ENCODE measurements at regions of chr18 and their contacts with region 1.

Region 1: DNA sequence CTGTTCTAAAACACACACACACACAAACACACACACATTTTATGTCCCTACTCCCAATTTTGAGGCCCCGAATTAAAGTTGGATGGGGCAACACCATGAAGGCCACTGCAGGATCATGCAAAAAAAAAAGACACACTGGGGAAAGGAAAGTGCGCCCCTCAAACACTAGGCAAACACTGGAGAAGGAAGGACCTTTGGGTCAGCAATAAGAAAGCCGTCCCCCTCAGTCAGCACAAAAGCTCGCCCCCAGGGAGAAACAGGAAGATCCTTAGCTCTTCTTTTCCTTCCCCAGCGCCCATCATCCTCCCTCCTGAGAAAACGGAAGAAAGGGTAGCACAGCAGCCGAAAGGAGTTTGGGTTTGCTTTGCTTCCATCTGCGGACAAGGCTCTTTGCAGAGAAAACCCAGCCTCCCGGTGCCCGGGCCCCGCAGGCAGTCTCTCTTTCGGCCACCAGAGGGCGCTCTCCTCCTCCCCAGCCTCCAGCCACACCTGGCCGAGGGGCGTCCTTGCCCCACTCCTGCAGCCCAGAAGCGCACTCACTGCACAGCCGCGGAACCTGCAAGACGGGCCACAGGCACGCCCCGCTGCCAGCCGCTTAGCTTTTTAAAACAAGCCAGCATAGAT is 248.5 kb downstream of the CDH20 start:
- DNase-seq: no peak
- H3K4me3 ChIP-seq: peak overlapping the region; percentile 55
- H3K27ac ChIP-seq: peak overlapping the region; percentile 24
- H3K27me3 ChIP-seq: no peaks in the 10 kb centered on the region
- CTCF ChIP-seq: peak; percentile 94

Region 2: GRCh38 chr18:61569176-61569892 is 12.4 kb before region 1 on chr18:
- CTCF ChIA-PET with region 1: interaction called, 72 read pairs
- POLR2A ChIA-PET with region 1: no interaction called
- DNase-seq: peak; percentile 71
- H3K4me3 ChIP-seq: no peak overlapping the region
- H3K27ac ChIP-seq: peak overlapping the region; percentile 86
- H3K27me3 ChIP-seq: no peaks in the 10 kb centered on the region
- CTCF ChIP-seq: no peak

Region 3: GRCh38 chr18:61606759-61607158 is 25.1 kb after region 1 on chr18:
- CTCF ChIA-PET with region 1: interaction called, 81 read pairs
- POLR2A ChIA-PET with region 1: no interaction called
- DNase-seq: peak; percentile 68
- H3K4me3 ChIP-seq: peak overlapping the region; percentile 63
- H3K27ac ChIP-seq: peak overlapping the region; percentile 78
- H3K27me3 ChIP-seq: no peaks in the 10 kb centered on the region
- CTCF ChIP-seq: no peak

Region 4: DNA sequence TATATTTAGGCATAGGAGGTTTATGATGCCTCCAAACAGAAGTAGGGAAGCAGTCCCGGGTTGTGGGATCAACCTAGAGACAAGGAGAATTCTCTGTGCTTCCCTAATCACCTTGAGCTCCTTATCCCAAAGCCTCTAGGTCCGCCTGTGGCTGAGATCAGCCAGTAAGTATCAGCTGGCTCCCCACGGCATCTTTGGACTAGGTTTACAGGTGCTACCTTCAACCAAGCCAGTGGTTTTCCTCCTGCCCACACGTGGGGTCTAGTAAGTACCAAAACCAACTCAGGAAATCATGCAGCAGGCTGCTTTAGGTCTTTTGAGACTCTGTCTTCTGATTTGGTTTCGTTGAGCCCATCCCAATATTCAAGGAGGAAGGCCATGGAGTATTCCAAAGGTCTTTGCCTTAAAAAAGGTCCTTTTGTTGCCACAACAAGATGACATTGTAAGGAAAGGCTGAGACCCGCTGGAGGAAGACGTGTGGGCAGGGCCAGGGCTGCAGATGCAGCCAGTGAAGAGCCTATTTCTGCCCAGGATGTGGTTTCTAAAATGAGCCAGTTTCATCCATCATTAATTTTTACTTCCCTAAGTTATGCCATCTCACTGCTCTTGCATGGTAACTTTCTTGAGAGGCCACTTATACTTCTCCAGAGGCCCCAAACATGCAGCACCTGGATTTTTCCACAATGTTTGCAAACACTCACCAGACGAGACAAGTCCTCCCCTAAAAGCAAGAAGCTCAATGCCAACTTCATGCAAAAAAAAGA is 62.4 kb after region 1 on chr18:
- CTCF ChIA-PET with region 1: interaction called, 10 read pairs
- POLR2A ChIA-PET with region 1: no interaction called
- DNase-seq: no peak
- H3K4me3 ChIP-seq: no peak overlapping the region
- H3K27ac ChIP-seq: no peak overlapping the region
- H3K27me3 ChIP-seq: no peaks in the 10 kb centered on the region
- CTCF ChIP-seq: no peak

Region 5: GRCh38 chr18:61893971-61894750 is 312.5 kb after region 1 on chr18:
- CTCF ChIA-PET with region 1: interaction called, 33 read pairs
- POLR2A ChIA-PET with region 1: no interaction called
- DNase-seq: no peak
- H3K4me3 ChIP-seq: peak overlapping the region; percentile 83
- H3K27ac ChIP-seq: peak overlapping the region; percentile 31
- H3K27me3 ChIP-seq: no peaks in the 10 kb centered on the region
- CTCF ChIP-seq: peak; percentile 24

Region 6: GRCh38 chr18:62131301-62131909 is 549.7 kb after region 1 on chr18:
- CTCF ChIA-PET with region 1: interaction called, 70 read pairs
- POLR2A ChIA-PET with region 1: no interaction called
- DNase-seq: no peak
- H3K4me3 ChIP-seq: no peak overlapping the region
- H3K27ac ChIP-seq: no peak overlapping the region
- H3K27me3 ChIP-seq: no peaks in the 10 kb centered on the region
- CTCF ChIP-seq: peak; percentile 97